ENCODE measurements at regions of chr17 and their contacts with region 1.

Region 1: DNA sequence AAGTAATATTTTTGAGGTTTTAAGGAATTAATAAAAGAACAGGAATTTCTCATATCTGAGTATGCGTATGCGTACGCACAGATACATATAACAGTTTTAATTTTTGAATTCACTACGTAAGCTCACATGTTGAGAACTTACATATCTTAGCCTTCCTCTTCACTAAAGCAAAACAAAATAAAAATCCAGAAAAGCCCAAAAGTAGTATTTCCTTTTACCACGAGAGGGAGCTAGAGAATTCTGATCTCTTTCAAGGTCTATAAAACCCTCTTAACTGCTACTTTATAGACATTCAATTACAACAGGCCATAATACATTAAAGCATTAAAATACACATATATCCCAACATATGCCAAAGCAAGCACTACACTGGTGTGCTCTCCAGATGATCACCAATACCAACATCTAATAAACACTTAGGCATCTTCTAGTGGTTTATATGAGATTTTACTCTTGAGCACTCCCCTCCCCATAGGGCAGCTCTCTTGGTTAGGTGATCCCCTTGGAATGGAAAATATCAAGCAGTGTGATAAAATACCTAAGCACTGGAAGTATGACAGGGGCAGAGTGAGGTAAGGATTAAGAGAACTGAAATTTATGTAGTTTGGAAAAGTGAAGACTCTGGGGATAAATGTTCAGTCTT is 94.0 kb downstream of the SKAP1 start:
- DNase-seq: peak; percentile 78
- H3K4me3 ChIP-seq: no peak overlapping the region
- H3K27ac ChIP-seq: no peak overlapping the region
- H3K4me1 ChIP-seq: no peaks in the 10 kb centered on the region
- H3K27me3 ChIP-seq: no peaks in the 10 kb centered on the region
- CTCF ChIP-seq: peak; percentile 80

Region 2: DNA sequence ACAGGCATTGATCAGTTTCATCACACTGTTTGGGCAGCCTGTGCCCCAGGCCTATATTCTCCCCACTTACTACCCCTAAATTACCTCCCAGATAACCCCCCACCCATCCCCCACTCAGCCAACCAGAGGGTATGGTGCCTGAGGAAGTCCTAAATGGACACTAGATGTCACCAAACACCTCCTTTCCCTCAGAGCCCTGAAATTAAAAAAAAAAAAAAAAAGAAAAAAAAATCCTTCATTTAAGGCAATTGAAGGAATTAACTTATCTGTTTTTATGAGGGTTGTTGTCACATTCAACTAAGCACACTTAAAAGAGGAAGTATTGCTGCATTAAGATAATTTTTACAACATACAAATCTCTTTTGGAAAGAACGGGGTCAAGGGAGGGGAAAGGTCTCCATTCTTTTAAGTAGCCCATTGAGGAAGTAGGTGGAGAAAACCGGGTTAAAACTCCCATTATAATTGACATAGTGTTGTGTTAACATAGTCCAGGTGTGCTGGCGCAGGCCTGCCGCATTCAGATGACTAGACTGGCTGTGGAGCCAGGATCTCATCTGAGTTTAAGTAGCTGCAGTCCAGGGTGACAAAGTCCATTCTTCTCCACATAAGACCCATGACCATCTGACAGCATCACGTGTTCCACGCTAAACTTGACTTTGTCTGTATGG is 182.2 kb before region 1 on chr17:
- CTCF ChIA-PET with region 1: no interaction called
- POLR2A ChIA-PET with region 1: no interaction called
- intact Hi-C with region 1: loop called (anchors 10 kb)
- DNase-seq: peak; percentile 77
- H3K4me3 ChIP-seq: no peak overlapping the region
- H3K27ac ChIP-seq: no peak overlapping the region
- H3K4me1 ChIP-seq: peaks cover 36% of the 10 kb centered on the region
- H3K27me3 ChIP-seq: no peaks in the 10 kb centered on the region
- CTCF ChIP-seq: peak; percentile 83

Region 3: GRCh38 chr17:48215583-48216139 is 120.3 kb before region 1 on chr17:
- CTCF ChIA-PET with region 1: interaction called, 10 read pairs
- POLR2A ChIA-PET with region 1: no interaction called
- intact Hi-C with region 1: loop called (anchors 10 kb)
- DNase-seq: peak; percentile 74
- H3K4me3 ChIP-seq: no peak overlapping the region
- H3K27ac ChIP-seq: no peak overlapping the region
- H3K4me1 ChIP-seq: peaks cover 4% of the 10 kb centered on the region
- H3K27me3 ChIP-seq: no peaks in the 10 kb centered on the region
- CTCF ChIP-seq: peak; percentile 75

Region 4: GRCh38 chr17:48441231-48441711 is 105.3 kb after region 1 on chr17:
- CTCF ChIA-PET with region 1: no interaction called
- POLR2A ChIA-PET with region 1: no interaction called
- intact Hi-C with region 1: no loop called
- DNase-seq: peak; percentile 96
- H3K4me3 ChIP-seq: peak overlapping the region; percentile 11
- H3K27ac ChIP-seq: peak overlapping the region; percentile 75
- H3K4me1 ChIP-seq: peaks cover 55% of the 10 kb centered on the region
- H3K27me3 ChIP-seq: no peaks in the 10 kb centered on the region
- CTCF ChIP-seq: no peak

Measured in A673 (cell line).